ENCODE measurements at regions of chr13 and their contacts with region 1.

Region 1: GRCh38 chr13:74133657-74134201 is 475 bp downstream of the KLF12 start:
- DNase-seq: peak; percentile 85
- ATAC-seq: peak; percentile 69
- H3K4me3 Mint-ChIP-seq: peak overlapping the region; percentile 98
- H3K27ac Mint-ChIP-seq: peak overlapping the region; percentile 100
- H3K4me1 Mint-ChIP-seq: peaks cover 30% of the 10 kb centered on the region
- H3K27me3 Mint-ChIP-seq: no peaks in the 10 kb centered on the region

Region 2: GRCh38 chr13:73984949-73985691 is 148.6 kb before region 1 on chr13:
- POLR2A ChIA-PET with region 1: interaction called, 15 read pairs
- DNase-seq: peak; percentile 55
- ATAC-seq: peak; percentile 95
- H3K4me3 Mint-ChIP-seq: peak overlapping the region; percentile 81
- H3K27ac Mint-ChIP-seq: peak overlapping the region; percentile 92
- H3K4me1 Mint-ChIP-seq: peaks cover 31% of the 10 kb centered on the region
- H3K27me3 Mint-ChIP-seq: no peaks in the 10 kb centered on the region

Region 3: DNA sequence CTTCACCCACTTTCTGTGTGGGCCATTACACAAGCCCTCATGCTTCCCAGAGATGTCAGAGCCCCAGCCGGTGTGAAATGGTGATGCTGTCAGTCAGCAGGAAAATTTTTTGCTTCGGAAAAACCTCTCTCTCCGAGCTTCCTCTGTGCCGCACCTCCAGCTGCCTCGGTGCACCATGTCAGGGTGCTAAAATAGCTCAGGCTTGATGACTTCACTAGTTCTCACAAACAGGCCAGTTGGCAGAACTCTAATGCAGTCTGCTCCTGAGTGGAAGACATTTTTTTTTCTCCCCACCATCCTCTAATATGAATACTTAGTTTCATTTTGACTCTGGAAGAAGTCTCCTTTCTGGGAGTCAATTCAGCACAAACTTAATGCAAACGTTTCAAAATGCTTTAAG is 70.8 kb before region 1 on chr13:
- POLR2A ChIA-PET with region 1: interaction called, 33 read pairs
- DNase-seq: no peak
- ATAC-seq: no peak
- H3K4me3 Mint-ChIP-seq: peak overlapping the region; percentile 74
- H3K27ac Mint-ChIP-seq: peak overlapping the region; percentile 86
- H3K4me1 Mint-ChIP-seq: peaks cover 55% of the 10 kb centered on the region
- H3K27me3 Mint-ChIP-seq: no peaks in the 10 kb centered on the region

Region 4: DNA sequence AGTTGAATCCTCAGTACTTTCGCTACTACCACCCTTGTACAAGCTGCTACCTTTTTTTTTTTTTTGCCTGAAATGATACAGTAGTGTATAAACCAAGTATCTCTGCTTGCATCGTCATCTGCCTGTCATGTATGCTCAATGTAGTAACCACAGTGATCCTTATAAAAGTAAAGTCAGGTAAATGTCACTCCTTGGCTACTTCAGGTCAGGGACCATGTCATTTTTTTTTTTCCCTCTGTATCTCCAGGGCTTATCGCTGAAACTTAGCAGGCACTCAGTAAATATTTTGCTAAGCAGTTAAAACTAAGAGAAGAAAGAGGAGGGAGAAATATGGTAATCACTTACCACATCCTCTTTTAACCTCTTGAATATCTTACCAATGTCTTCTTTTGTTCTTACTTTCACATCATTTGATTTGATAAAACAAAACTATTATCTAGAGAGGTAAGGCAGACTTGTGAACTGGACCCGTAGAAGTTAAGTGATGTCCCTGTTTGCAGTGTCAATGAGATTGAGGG is 97.3 kb after region 1 on chr13:
- POLR2A ChIA-PET with region 1: interaction called, 19 read pairs
- DNase-seq: no peak
- ATAC-seq: peak; percentile 84
- H3K4me3 Mint-ChIP-seq: peak overlapping the region; percentile 60
- H3K27ac Mint-ChIP-seq: peak overlapping the region; percentile 90
- H3K4me1 Mint-ChIP-seq: peaks cover 24% of the 10 kb centered on the region
- H3K27me3 Mint-ChIP-seq: no peaks in the 10 kb centered on the region

Region 5: DNA sequence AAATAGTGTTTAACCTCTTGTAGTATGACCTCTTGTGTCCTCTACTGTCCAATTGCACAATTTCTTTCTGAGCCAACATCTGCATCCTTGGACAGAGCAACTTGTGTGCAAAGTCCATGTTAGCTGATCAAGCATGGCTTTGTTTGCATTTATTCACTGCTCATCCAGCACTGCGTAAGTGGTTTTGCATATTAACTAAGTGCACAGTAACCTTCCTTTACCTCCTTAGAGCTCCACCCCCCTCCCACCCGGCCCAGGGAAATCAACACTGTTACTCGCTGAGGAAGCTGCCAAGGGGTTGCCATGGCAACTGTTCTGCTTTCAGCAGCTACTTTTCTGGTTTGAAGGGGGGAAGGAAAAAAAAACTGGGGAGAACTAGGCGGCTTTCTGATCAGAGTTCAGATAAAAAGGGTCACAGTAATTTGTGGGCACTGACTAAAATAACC is 154.0 kb after region 1 on chr13:
- POLR2A ChIA-PET with region 1: interaction called, 93 read pairs
- DNase-seq: peak; percentile 48
- ATAC-seq: peak; percentile 52
- H3K4me3 Mint-ChIP-seq: peak overlapping the region; percentile 81
- H3K27ac Mint-ChIP-seq: peak overlapping the region; percentile 86
- H3K4me1 Mint-ChIP-seq: peaks cover 42% of the 10 kb centered on the region
- H3K27me3 Mint-ChIP-seq: no peaks in the 10 kb centered on the region